PC-9 (cell line): ENCODE measurements at regions of chr13 and their contacts with region 1.

Region 1: GRCh38 chr13:34065912-34066311 is 248.0 kb downstream of the RFC3 start:
- DNase-seq: peak; percentile 43 to 94
- H3K4me3 ChIP-seq: no peak overlapping the region
- H3K27ac ChIP-seq: peak overlapping the region; percentile 61
- H3K4me1 ChIP-seq: peaks cover 31% of the 10 kb centered on the region
- H3K27me3 ChIP-seq: no peaks in the 10 kb centered on the region
- CTCF ChIP-seq: no peak

Region 2: GRCh38 chr13:34044660-34045080 is 21.2 kb before region 1 on chr13:
- CTCF ChIA-PET with region 1: no interaction called
- POLR2A ChIA-PET with region 1: no interaction called
- intact Hi-C with region 1: loop called (anchors 1 kb)
- DNase-seq: peak in 1 of 2 experiments; percentile 93
- H3K4me3 ChIP-seq: 0 out of 2 replicates have a peak overlapping the region, but pooled peaks have one; percentile 3
- H3K27ac ChIP-seq: peak overlapping the region; percentile 77
- H3K4me1 ChIP-seq: peaks cover 27% of the 10 kb centered on the region
- H3K27me3 ChIP-seq: no peaks in the 10 kb centered on the region
- CTCF ChIP-seq: no peak